Sigmoid colon (tissue), 7 donors: ENCODE measurements at regions of chr2 and their contacts with region 1.

Region 1: GRCh38 chr2:232327105-232328041 is 51.2 kb upstream of the ALPP start:
- DNase-seq: peak; percentile 72
- H3K4me3 ChIP-seq: no peak overlapping the region
- H3K27ac ChIP-seq: no peak overlapping the region
- H3K4me1 ChIP-seq: no peaks in the 10 kb centered on the region
- H3K27me3 ChIP-seq: no peaks in the 10 kb centered on the region
- CTCF ChIP-seq: peak; percentile 57 to 76 (median 72)
- EP300 ChIP-seq: no peak
- POLR2A ChIP-seq: no peak

Region 2: DNA sequence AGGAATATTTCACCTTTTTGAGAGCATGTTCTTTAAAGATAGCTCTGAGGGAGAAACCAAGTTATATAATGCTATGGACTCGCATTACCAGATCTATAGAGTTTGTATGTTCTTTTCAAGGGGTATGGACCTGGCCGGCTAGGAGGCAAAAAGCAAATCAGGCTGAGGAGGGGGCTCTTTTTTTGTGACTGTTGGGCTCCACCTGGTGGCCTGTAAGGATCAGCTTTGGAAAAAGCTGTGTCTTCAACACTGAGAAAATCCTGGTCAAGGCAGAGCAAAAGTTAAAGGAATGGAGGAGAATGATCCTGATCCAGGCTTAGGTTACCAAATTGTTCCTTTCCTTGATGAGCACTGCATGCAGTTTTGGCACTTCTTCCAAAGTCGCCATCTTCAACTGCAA is 185.3 kb before region 1 on chr2:
- intact Hi-C with region 1: loop called (anchors 10 kb)
- DNase-seq: no peak
- H3K4me3 ChIP-seq: no peak overlapping the region
- H3K27ac ChIP-seq: no peak overlapping the region
- H3K4me1 ChIP-seq: no peaks in the 10 kb centered on the region
- H3K27me3 ChIP-seq: no peaks in the 10 kb centered on the region
- CTCF ChIP-seq: peak; percentile 25 to 40 (median 34)
- EP300 ChIP-seq: no peak
- POLR2A ChIP-seq: no peak